ENCODE measurements at regions of chr12 and their contacts with region 1.

Region 1: GRCh38 chr12:65685514-65685913 is 138.8 kb upstream of the HMGA2 start:
- H3K4me3 Mint-ChIP-seq: no peak overlapping the region
- H3K27ac Mint-ChIP-seq: no peak overlapping the region
- H3K4me1 Mint-ChIP-seq: no peaks in the 10 kb centered on the region
- H3K27me3 Mint-ChIP-seq: no peaks in the 10 kb centered on the region

Region 2: DNA sequence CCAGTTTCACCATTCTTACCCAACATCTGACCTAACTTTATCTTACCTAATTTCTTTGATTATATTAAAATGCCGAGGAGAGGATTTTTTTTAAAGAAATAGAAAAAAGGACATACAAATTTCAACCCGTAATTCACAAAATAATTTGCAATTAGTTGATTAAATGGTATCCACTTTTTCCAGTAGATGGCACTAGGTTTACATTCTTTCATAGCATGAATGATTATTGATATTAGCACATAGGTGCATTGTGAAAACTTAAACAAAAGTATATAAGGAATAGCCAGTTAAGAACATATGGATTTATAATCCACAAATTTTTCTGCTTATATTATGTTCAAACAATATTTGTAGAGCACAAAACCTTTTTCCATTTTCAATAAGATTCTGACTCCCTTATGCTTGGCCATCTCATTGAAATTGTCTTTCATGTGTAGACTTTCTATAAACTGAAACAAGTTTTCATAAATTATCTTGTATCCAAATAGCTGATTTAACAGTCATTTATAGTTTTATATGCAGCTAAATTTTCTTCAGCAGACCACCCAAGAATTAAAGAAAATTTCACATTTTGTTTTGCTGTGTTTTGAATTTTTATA is 371.7 kb before region 1 on chr12:
- intact Hi-C with region 1: loop called (anchors 5 kb)
- H3K4me3 Mint-ChIP-seq: no peak overlapping the region
- H3K27ac Mint-ChIP-seq: no peak overlapping the region
- H3K4me1 Mint-ChIP-seq: peaks cover under 1% of the 10 kb centered on the region
- H3K27me3 Mint-ChIP-seq: no peaks in the 10 kb centered on the region